ENCODE measurements at regions of chr12 and their contacts with region 1.

Region 1: DNA sequence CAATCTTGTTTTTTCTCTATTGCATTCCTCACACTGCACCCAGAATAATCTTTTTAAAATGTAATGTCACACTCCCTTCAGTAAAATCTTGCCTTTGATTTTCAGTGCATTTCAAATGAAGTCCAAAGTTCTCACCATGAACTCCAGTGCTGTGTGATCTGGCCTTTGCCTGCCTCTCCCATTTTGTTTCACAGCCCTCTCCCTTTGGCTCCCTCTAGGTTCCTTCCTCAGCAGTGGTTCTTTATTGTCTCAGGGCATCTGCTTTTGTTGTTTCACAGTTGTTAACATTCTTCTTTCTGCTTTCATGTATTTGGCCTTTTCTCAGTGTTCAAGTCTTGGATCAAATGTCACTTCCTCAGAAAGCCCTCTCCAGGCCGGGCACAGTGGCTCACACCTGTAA is 84.5 kb upstream of the AMN1 start:
- DNase-seq: no peak
- ATAC-seq: no peak
- H3K4me3 ChIP-seq: no peak overlapping the region
- H3K4me3 Mint-ChIP-seq: no peak overlapping the region
- H3K27ac ChIP-seq: no peak overlapping the region
- H3K27ac Mint-ChIP-seq: no peak overlapping the region
- H3K4me1 ChIP-seq: peaks cover 5% of the 10 kb centered on the region
- H3K4me1 Mint-ChIP-seq: peaks cover 20% of the 10 kb centered on the region
- H3K27me3 ChIP-seq: no peaks in the 10 kb centered on the region
- H3K27me3 Mint-ChIP-seq: no peaks in the 10 kb centered on the region
- CTCF ChIP-seq: no peak

Region 2: GRCh38 chr12:31768046-31768445 is 45.3 kb before region 1 on chr12:
- CTCF ChIA-PET with region 1: no interaction called
- POLR2A ChIA-PET with region 1: no interaction called
- intact Hi-C with region 1: loop called in 1 of 2 experiments (anchors 5 kb)
- DNase-seq: peak in 1 of 14 experiments; percentile 34
- ATAC-seq: no peak
- H3K4me3 ChIP-seq: no peak overlapping the region
- H3K4me3 Mint-ChIP-seq: no peak overlapping the region
- H3K27ac ChIP-seq: no peak overlapping the region
- H3K27ac Mint-ChIP-seq: peak overlapping the region; percentile 56
- H3K4me1 ChIP-seq: no peaks in the 10 kb centered on the region
- H3K4me1 Mint-ChIP-seq: peaks cover 19% of the 10 kb centered on the region
- H3K27me3 ChIP-seq: no peaks in the 10 kb centered on the region
- H3K27me3 Mint-ChIP-seq: no peaks in the 10 kb centered on the region
- CTCF ChIP-seq: no peak

Measured in CD4-positive, alpha-beta T cell (primary cell).